ENCODE measurements at regions of chr1 and their contacts with region 1.

Region 1: GRCh38 chr1:24526940-24527542 is 24.4 kb downstream of the RCAN3 start:
- DNase-seq: peak; percentile 68
- ATAC-seq: peak; percentile 76
- H3K4me3 Mint-ChIP-seq: no peak overlapping the region
- H3K27ac Mint-ChIP-seq: no peak overlapping the region
- H3K4me1 Mint-ChIP-seq: peaks cover 71% of the 10 kb centered on the region
- H3K27me3 Mint-ChIP-seq: no peaks in the 10 kb centered on the region

Region 2: DNA sequence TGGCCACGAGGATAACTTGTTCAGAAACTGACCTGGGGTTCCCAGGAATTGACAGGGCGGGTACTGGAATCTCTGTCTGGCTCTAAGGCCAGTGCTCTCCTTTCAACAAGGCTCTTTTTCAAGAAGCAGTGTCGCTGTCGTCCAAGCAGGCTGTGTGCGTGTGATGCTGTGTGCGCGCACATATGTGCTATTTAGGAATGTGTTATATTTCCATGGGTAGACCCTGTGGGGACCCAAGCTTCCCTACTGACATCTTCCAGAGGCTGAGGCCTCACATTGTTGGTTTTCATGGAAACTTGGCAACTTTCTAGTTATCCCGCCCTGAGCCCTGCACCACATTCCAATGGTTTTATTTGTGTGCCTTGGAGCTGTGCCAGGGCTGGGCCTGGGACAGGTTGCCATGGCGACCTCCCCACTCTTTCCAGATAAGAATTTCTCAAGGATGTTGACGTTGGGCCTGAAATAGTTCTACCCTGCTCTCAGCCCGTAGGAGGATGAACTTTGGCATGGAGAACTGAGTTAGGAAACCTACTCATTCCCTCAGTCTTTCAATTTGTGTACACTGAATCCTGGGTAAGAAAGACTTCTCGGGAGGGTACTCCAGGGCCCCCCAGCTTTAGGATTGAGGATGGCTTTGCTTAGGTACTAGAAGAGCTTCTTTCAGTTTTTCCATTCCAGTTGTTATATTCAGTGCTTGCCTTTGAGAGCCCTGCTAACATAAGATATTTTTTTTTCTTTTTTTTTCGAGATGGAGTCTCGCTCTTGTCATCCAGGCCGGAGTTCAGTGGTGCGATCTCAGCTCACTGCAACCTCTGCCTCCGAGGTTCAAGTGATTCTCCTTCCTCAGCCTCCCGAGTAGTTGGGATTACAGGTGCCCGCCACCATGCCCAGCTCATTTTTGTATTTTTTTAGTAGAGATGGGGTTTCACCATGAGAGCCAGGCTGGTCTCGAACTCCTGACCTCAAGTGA is 508.1 kb before region 1 on chr1:
- CTCF ChIA-PET with region 1: no interaction called
- POLR2A ChIA-PET with region 1: no interaction called
- intact Hi-C with region 1: no loop called
- DNase-seq: no peak
- ATAC-seq: no peak
- H3K4me3 Mint-ChIP-seq: no peak overlapping the region
- H3K27ac Mint-ChIP-seq: no peak overlapping the region
- H3K4me1 Mint-ChIP-seq: no peaks in the 10 kb centered on the region
- H3K27me3 Mint-ChIP-seq: peaks cover 2% of the 10 kb centered on the region

Region 3: GRCh38 chr1:24486331-24487065 is 40.5 kb before region 1 on chr1:
- CTCF ChIA-PET with region 1: interaction called, 11 read pairs
- POLR2A ChIA-PET with region 1: no interaction called
- intact Hi-C with region 1: no loop called
- DNase-seq: peak; percentile 36
- ATAC-seq: no peak
- H3K4me3 Mint-ChIP-seq: peak overlapping the region; percentile 61
- H3K27ac Mint-ChIP-seq: peak overlapping the region; percentile 91
- H3K4me1 Mint-ChIP-seq: peaks cover 79% of the 10 kb centered on the region
- H3K27me3 Mint-ChIP-seq: no peaks in the 10 kb centered on the region

Region 4: GRCh38 chr1:24513706-24514105 is 13.3 kb before region 1 on chr1:
- CTCF ChIA-PET with region 1: interaction called, 61 read pairs
- POLR2A ChIA-PET with region 1: no interaction called
- intact Hi-C with region 1: no loop called
- DNase-seq: no peak
- ATAC-seq: no peak
- H3K4me3 Mint-ChIP-seq: no peak overlapping the region
- H3K27ac Mint-ChIP-seq: peak overlapping the region; percentile 65
- H3K4me1 Mint-ChIP-seq: peaks cover 78% of the 10 kb centered on the region
- H3K27me3 Mint-ChIP-seq: no peaks in the 10 kb centered on the region

Region 5: DNA sequence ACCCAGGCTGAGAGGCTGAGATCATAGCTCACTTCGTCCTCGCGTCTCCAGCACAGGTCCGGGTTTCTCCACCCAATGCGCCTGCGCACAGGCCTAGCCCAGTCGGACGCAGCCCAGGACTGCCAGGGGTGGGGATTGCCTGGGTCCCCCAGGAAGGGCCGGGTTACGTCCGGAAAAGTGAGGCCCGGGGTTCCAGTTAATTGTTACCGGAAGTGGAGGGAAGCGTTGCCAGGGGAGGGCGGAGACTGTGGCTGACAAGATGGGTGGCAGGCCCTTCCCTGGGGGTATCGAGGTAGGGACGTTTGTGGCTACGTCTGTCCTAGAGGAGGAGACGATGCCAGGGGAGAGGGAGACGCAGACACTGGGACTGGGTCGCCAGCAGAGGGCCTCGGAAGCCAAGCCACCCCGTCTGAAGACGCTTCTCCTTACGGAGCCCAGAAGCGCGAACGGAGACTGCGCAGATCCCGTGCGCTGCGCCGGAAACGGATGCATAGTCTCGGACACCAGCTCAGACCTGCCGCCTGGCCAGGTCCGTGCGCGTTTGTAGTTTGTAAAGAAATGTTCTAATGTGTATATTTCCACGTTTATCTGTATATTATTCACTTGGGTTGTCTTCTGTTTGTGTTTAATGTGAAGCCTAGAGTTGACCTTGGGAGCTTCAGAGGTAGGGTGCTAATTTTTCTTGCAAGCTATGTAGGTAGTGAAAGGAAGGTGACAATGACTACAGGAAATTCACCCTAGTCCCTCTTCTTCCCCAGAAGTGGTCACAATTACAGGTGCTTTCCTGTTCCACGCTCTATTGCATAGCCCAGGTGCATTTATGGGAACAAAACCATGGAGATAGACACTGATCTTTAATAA is 712.9 kb after region 1 on chr1:
- CTCF ChIA-PET with region 1: no interaction called
- POLR2A ChIA-PET with region 1: no interaction called
- intact Hi-C with region 1: no loop called
- DNase-seq: peak; percentile 96
- ATAC-seq: peak; percentile 91
- H3K4me3 Mint-ChIP-seq: peak overlapping the region; percentile 74
- H3K27ac Mint-ChIP-seq: peak overlapping the region; percentile 89
- H3K4me1 Mint-ChIP-seq: peaks cover 43% of the 10 kb centered on the region
- H3K27me3 Mint-ChIP-seq: no peaks in the 10 kb centered on the region

Region 6: GRCh38 chr1:25356848-25357247 is 829.8 kb after region 1 on chr1:
- CTCF ChIA-PET with region 1: no interaction called
- POLR2A ChIA-PET with region 1: no interaction called
- intact Hi-C with region 1: no loop called
- DNase-seq: no peak
- ATAC-seq: no peak
- H3K4me3 Mint-ChIP-seq: no peak overlapping the region
- H3K27ac Mint-ChIP-seq: peak overlapping the region; percentile 83
- H3K4me1 Mint-ChIP-seq: peaks cover 21% of the 10 kb centered on the region
- H3K27me3 Mint-ChIP-seq: no peaks in the 10 kb centered on the region

Measured in activated CD4-positive, alpha-beta T cell treated with anti-CD3 and anti-CD28 coated beads for 36 hours (primary cell).